ENCODE measurements at regions of chr4 and their contacts with region 1.

Region 1: DNA sequence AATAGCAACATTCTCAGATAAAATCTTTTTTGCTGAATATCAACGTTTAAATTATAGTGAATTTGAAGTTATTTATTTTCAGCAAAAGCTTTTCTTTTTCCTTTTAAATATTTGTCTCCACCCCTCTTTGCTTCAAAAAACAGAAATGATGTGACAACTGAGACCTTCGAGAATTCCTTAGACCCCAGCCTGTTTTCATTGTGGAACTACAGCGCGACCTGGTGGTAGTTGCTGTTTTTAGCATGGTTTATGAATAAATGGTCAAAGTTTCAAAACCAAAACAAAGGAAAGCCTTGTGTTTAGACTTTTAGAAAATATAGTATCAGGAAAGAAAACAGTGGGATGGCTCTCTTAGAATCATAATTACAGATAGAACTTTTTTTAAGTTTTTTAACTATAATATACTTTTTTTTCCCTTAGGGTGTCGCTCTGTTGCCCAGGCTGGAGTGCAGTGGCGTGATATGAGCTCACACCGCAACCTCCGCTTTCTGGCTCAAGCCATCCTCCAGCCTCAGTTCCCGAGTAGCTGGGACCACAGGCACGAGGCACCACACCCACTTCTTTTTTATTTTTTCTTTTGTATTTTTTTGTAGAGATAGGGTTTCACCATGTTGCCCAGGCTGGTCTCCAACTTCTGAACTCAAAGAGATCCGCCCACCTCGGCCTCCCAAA is 26.8 kb upstream of the TMEM184C start:
- DNase-seq: peak; percentile 79
- ATAC-seq: peak; percentile 74
- H3K4me3 ChIP-seq: no peak overlapping the region
- H3K27ac ChIP-seq: peak overlapping the region; percentile 41; the same call in 1 of the 2 replicates
- H3K4me1 ChIP-seq: peaks cover 6% of the 10 kb centered on the region
- H3K27me3 ChIP-seq: no peaks in the 10 kb centered on the region
- CTCF ChIP-seq: peak; percentile 90
- POLR2A ChIP-seq: peak; percentile 41; the same call in 1 of the 2 replicates
- RAD21 ChIP-seq: peak; percentile 97

Region 2: GRCh38 chr4:147029296-147029695 is 561.1 kb before region 1 on chr4:
- CTCF ChIA-PET with region 1: no interaction called
- POLR2A ChIA-PET with region 1: no interaction called
- dilution Hi-C with region 1: no loop called
- in situ Hi-C with region 1: loop called (anchors 10 kb)
- intact Hi-C with region 1: no loop called
- DNase-seq: no peak
- ATAC-seq: no peak
- H3K4me3 ChIP-seq: no peak overlapping the region
- H3K27ac ChIP-seq: no peak overlapping the region
- H3K4me1 ChIP-seq: no peaks in the 10 kb centered on the region
- H3K27me3 ChIP-seq: peaks cover 4% of the 10 kb centered on the region
- CTCF ChIP-seq: no peak
- POLR2A ChIP-seq: no peak
- RAD21 ChIP-seq: no peak

Region 3: DNA sequence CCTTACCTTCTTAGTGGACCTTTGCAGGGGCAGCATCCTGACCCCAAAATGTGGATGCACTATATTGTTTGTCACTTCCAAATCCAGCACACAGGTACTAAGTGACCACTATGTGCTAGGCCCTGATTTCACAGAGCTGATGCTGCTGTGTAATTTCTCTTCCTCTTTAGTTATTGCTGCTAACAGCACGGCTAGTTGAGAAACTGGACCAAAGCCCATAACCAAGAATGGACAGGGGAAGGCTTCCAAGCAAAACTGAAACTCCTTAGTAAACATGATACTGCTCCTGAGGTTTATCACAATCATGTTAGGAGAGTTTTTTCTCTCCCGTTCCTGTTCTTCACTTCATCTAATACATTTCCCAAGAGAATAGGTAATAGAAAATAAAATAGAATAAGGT is 471.9 kb before region 1 on chr4:
- CTCF ChIA-PET with region 1: interaction called, 3 read pairs
- POLR2A ChIA-PET with region 1: no interaction called
- dilution Hi-C with region 1: no loop called
- in situ Hi-C with region 1: loop called (anchors 5 kb)
- intact Hi-C with region 1: no loop called
- DNase-seq: peak; percentile 75
- ATAC-seq: peak; percentile 80
- H3K4me3 ChIP-seq: no peak overlapping the region
- H3K27ac ChIP-seq: no peak overlapping the region
- H3K4me1 ChIP-seq: peaks cover 4% of the 10 kb centered on the region
- H3K27me3 ChIP-seq: no peaks in the 10 kb centered on the region
- CTCF ChIP-seq: no peak
- POLR2A ChIP-seq: no peak
- RAD21 ChIP-seq: no peak

Region 4: DNA sequence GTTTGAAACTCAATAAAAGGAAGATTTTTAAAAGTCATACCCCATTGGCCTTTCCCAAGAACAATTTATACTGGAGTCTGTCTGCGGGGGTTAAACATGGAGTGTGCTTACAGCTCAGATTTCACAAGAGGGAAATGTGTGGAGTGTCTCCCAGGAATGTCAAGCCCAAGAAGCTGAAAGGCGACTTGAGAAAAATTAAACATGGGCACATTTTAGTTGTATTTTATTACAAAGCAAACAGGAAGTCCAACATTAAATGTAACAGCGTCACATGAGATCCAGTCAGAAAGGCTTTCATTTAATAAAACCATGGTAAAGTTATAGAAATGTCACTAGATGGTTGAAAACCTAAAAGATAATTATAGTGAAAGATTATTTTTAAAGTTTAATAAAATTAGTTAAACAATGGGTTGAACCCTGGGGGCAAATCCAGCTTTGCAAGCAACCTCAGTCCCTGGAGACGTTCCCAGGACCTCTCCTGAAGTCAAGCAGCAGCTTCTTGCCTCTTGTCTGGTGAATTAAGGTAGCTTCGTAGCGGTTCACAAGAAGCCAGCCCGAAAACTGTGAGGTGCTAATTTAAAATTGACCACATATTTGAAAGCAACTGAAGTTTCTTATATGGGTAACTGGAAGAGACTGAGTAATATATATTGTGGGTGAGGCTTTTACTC is 277.9 kb before region 1 on chr4:
- CTCF ChIA-PET with region 1: no interaction called
- POLR2A ChIA-PET with region 1: no interaction called
- dilution Hi-C with region 1: no loop called
- in situ Hi-C with region 1: no loop called
- intact Hi-C with region 1: loop called (anchors 10 kb)
- DNase-seq: peak; percentile 81
- ATAC-seq: peak; percentile 79
- H3K4me3 ChIP-seq: no peak overlapping the region
- H3K27ac ChIP-seq: peak overlapping the region; percentile 94; the same call in 1 of the 2 replicates
- H3K4me1 ChIP-seq: peaks cover 9% of the 10 kb centered on the region
- H3K27me3 ChIP-seq: no peaks in the 10 kb centered on the region
- CTCF ChIP-seq: no peak
- POLR2A ChIP-seq: no peak
- RAD21 ChIP-seq: no peak

Region 5: GRCh38 chr4:147518846-147519767 is 71.3 kb before region 1 on chr4:
- CTCF ChIA-PET with region 1: interaction called, 11 read pairs
- POLR2A ChIA-PET with region 1: no interaction called
- dilution Hi-C with region 1: no loop called
- in situ Hi-C with region 1: no loop called
- intact Hi-C with region 1: loop called (anchors 1 kb)
- DNase-seq: peak; percentile 86
- ATAC-seq: peak; percentile 89
- H3K4me3 ChIP-seq: no peak overlapping the region
- H3K27ac ChIP-seq: no peak overlapping the region
- H3K4me1 ChIP-seq: no peaks in the 10 kb centered on the region; the same call in 1 of the 2 replicates
- H3K27me3 ChIP-seq: no peaks in the 10 kb centered on the region
- CTCF ChIP-seq: peak; percentile 85
- POLR2A ChIP-seq: no peak
- RAD21 ChIP-seq: peak; percentile 88